OCI-LY7 (cell line): ENCODE measurements at regions of chr13 and their contacts with region 1.

Region 1: DNA sequence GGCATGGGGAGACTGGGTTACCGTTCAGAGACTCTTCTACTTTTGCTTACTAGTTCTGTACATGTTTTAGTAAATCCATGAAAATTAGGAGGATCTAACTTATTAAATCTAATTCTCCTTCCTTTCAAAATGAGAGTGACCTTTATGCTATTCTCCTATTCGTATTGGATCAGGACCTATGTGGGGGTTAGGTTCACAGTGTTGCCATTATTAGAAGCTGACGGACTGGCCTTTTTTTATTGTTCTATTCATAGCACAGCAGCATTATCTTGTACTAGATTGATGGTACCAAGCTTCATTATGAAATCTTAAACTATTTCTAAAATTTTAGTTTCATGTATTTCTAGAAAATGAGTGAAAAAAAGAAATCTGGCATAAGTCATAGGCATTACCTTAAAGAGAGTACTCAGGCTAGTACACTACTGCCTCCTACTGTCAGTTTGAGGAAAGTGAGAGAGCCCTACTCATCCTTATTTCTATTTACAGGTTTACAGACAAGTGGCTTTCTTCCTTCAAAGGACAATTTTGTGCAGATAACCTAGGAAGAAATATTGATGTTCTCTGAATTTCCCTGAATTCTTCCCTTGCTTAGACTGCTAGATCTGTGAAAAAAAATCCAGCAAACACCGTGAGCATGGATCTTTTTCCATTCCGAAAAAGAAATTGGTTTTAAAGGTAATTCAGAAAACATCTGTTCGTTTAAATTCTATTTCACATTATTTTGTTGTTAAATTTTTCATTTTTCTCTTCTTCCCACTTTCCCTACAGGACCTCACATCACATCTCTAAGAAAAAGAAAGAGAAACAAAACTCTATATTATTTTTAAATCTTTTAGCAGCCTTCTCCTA is 485.5 kb downstream of the DIAPH3 start:
- DNase-seq: peak; percentile 22
- H3K4me3 ChIP-seq: no peak overlapping the region
- H3K27ac ChIP-seq: no peak overlapping the region
- H3K4me1 ChIP-seq: no peaks in the 10 kb centered on the region
- CTCF ChIP-seq: peak; percentile 78

Region 2: DNA sequence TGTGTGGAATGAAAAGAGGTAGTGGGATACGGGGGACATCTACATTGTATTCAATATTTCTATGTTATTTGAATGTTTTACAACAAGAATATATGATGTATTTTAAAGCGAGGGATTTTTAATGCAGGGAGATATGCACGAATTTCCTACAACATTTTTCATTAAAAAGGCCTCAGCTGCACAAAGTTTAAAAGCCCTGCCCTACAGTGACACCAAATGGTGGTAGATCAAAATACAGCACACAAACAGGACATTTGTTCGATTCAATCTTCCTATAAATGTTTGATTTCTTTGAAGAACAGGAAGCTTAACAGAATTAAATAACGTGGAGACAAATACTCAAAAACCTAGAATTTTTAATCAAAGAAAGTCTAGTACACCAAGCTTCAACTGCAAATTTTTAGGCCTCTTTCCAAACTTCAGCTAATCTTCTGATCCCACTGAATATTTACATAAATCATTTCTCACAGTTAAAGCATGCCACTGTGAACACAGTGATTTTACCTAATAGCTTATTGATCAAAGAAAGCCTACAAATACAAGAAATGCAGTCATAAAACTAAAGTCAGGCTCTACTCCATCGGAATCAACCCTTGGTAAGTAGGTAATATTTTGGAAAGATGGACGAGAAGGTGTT is 228.3 kb after region 1 on chr13:
- CTCF ChIA-PET with region 1: no interaction called
- POLR2A ChIA-PET with region 1: no interaction called
- intact Hi-C with region 1: loop called (anchors 5 kb)
- DNase-seq: peak; percentile 16
- H3K4me3 ChIP-seq: no peak overlapping the region
- H3K27ac ChIP-seq: no peak overlapping the region
- H3K4me1 ChIP-seq: no peaks in the 10 kb centered on the region
- CTCF ChIP-seq: peak; percentile 82

Region 3: GRCh38 chr13:59970847-59971246 is 292.7 kb after region 1 on chr13:
- CTCF ChIA-PET with region 1: no interaction called
- POLR2A ChIA-PET with region 1: no interaction called
- intact Hi-C with region 1: no loop called
- DNase-seq: no peak
- H3K4me3 ChIP-seq: no peak overlapping the region
- H3K27ac ChIP-seq: no peak overlapping the region
- H3K4me1 ChIP-seq: no peaks in the 10 kb centered on the region
- CTCF ChIP-seq: no peak

Region 4: DNA sequence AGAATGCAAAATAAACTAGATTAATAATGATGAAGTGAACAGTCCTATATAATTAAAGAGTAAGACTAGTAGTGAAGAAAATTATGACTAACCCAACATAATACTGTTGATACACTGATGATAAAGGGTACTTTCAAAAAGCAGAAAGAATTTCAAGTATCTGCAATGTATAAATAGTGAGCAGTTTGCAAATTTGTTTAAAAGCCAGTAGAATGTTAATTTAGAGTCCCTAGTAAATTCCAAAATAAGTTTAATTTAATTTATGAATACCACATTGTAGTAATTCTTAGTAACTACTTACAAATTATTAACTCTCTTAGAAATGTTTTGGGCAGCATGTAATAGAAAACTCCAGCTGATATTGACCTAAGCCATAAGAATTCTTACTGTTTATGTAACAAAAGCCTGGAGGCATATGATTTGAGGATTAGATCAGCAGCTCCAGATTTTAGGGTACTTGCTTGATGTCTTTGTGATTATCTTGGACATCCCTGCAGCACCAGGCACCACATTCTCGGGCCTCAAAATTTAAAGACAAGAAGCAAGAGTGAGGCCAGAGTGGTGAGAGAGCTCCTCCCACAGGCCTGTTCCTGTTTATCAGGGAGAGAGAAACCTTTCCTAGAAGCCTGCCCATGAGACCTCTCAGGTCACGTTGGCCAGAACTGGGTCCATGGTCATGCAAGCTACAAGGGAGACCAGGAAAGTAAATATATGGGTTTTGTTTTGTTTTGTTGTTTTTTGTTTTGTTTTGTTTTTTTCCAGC is 651.2 kb after region 1 on chr13:
- CTCF ChIA-PET with region 1: no interaction called
- POLR2A ChIA-PET with region 1: no interaction called
- intact Hi-C with region 1: loop called (anchors 5 kb)
- DNase-seq: peak; percentile 27
- H3K4me3 ChIP-seq: no peak overlapping the region
- H3K27ac ChIP-seq: no peak overlapping the region
- H3K4me1 ChIP-seq: no peaks in the 10 kb centered on the region
- CTCF ChIP-seq: peak; percentile 70